ENCODE measurements at regions of chrX and their contacts with region 1.

Region 1: GRCh38 chrX:53481816-53482465 is 47.8 kb upstream of the HSD17B10 start:
- H3K4me3 ChIP-seq: no peak overlapping the region
- H3K27ac ChIP-seq: no peak overlapping the region
- H3K4me1 ChIP-seq: no peaks in the 10 kb centered on the region
- CTCF ChIP-seq: peak; percentile 36; the same call in 1 of the 2 replicates

Region 2: DNA sequence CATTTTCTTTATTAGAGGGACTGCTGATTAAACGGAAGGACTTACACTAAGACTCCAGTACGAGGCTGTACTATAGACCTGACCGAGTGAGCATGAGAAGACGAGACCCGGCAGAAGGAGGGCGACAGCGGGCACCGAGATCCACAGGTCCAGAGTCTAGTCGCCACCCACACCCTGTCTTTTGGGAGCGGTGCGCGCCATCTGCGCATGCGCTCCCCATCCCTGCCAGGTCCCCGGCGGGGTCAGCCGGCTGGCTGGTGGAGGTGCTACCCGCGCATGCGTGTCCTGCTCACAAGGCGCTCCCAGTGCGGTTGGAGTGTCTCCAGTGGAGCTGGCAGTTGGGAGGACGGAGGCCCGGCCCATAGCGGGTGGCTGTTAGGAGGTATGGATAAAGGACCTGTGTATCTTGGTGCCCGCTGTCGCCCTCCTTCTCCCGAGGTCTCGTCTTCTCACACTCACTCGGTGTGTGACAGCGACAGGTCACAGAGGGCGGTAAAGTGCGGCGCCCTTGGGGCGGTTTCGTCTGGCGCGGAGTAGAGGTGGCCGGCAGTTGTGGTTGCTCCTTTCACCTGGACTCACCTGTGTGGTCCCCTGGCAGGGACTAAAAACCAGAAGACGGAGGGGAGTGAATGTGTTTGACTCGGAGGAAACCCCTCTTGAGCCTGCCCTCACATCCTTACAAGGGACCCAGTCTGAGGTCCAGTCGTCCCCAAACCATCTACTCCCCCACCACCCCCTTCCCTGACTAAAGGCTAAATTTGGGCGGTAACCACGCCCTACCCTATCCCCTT is 40.2 kb before region 1 on chrX:
- CTCF ChIA-PET with region 1: interaction called, 42 read pairs
- POLR2A ChIA-PET with region 1: no interaction called
- H3K4me3 ChIP-seq: peak overlapping the region; percentile 48
- H3K27ac ChIP-seq: peak overlapping the region; percentile 61; the same call in 1 of the 2 replicates
- H3K4me1 ChIP-seq: peaks cover 3% of the 10 kb centered on the region; the same call in 1 of the 2 replicates
- CTCF ChIP-seq: no peak

Region 3: GRCh38 chrX:53452812-53453211 is 29.1 kb before region 1 on chrX:
- CTCF ChIA-PET with region 1: interaction called, 42 read pairs
- POLR2A ChIA-PET with region 1: no interaction called
- H3K4me3 ChIP-seq: no peak overlapping the region
- H3K27ac ChIP-seq: no peak overlapping the region
- H3K4me1 ChIP-seq: no peaks in the 10 kb centered on the region
- CTCF ChIP-seq: no peak

Region 4: DNA sequence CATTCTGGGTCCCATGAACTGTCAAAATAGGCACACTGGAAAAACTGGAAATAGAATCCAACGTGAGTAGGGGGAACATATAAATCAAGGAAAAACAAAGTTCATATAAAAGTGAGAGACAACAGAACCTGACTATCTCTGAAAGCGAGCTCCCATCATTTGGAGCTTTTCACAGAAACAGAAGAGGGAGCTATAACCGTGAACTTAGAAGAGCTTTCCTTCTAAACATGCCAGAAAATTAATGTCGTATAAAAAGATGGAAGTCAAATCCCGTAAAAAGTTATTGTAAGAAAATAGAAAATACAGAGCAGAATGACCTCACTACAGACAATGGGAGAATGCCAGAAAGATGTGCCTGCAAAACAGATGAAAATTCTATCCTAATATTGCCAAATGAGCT is 23.9 kb before region 1 on chrX:
- CTCF ChIA-PET with region 1: interaction called, 46 read pairs
- POLR2A ChIA-PET with region 1: no interaction called
- H3K4me3 ChIP-seq: no peak overlapping the region
- H3K27ac ChIP-seq: no peak overlapping the region
- H3K4me1 ChIP-seq: no peaks in the 10 kb centered on the region
- CTCF ChIP-seq: peak; percentile 15; the same call in 1 of the 2 replicates

Region 5: GRCh38 chrX:53471346-53471745 is 10.6 kb before region 1 on chrX:
- CTCF ChIA-PET with region 1: interaction called, 28 read pairs
- POLR2A ChIA-PET with region 1: no interaction called
- H3K4me3 ChIP-seq: no peak overlapping the region
- H3K27ac ChIP-seq: no peak overlapping the region
- H3K4me1 ChIP-seq: no peaks in the 10 kb centered on the region
- CTCF ChIP-seq: no peak

Region 6: DNA sequence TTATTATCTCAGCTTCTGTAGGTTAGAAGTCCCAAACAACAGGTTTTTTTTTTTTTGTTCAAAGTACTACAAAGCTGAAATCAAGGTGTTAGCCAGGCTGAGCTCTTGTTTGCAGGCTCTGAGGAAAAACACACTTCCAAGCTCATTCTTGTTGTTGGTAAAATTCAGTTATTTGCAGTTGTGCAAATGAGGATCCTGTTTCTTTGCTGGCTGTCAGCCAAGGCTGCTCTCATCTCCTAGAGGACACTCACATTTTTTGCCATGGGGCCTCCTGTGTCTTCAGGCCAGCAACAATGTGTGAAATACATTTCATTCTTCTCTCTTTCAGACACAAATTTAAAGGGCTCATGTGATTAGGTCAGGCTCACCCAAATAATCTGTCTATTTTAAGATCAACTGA is 12.5 kb after region 1 on chrX:
- CTCF ChIA-PET with region 1: interaction called, 79 read pairs
- POLR2A ChIA-PET with region 1: no interaction called
- H3K4me3 ChIP-seq: no peak overlapping the region
- H3K27ac ChIP-seq: no peak overlapping the region
- H3K4me1 ChIP-seq: peaks cover 5% of the 10 kb centered on the region; the same call in 1 of the 2 replicates
- CTCF ChIP-seq: no peak

Region 7: GRCh38 chrX:53511322-53511721 is 29.4 kb after region 1 on chrX:
- CTCF ChIA-PET with region 1: no interaction called
- POLR2A ChIA-PET with region 1: no interaction called
- H3K4me3 ChIP-seq: no peak overlapping the region
- H3K27ac ChIP-seq: no peak overlapping the region
- H3K4me1 ChIP-seq: no peaks in the 10 kb centered on the region
- CTCF ChIP-seq: no peak

Region 8: DNA sequence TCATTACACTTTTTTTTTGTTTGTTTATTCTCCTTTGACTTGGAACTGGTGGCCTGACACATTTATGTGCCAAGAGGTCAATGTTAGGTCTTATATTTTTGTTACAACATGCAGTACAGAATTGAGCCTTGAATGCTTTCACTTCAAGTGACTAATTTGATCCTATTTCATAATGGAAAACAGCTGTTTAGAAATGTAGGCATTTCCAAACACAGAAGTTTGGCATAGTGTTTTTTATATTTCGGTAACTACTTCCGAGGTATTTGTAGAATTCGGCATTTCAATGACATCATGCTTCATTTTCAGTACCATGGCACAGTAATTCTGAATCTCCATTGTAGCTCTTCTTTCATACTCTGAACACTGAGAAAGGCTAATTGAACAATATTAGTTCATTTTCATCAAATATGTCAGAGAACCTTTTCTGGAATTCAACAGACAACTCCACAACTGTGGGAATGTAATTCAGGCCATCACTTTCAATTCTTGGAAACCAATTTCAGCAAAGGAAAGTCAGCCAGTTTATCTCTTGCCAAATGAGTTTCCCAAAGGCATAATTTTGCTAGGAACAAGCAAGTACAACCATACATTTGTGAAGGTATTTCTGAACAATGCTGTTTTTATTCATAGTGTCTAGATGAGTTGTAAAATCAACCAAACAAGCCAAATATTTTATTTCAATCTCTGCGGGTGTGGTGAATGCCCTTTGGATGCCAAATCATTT is 689.7 kb after region 1 on chrX:
- CTCF ChIA-PET with region 1: no interaction called
- POLR2A ChIA-PET with region 1: no interaction called
- H3K4me3 ChIP-seq: no peak overlapping the region
- H3K27ac ChIP-seq: no peak overlapping the region
- H3K4me1 ChIP-seq: no peaks in the 10 kb centered on the region
- CTCF ChIP-seq: no peak

Measured in HEK293 (cell line).